Calu3 (cell line): ENCODE measurements at regions of chrX and their contacts with region 1.

Region 1: GRCh38 chrX:19334945-19335626 is 8.6 kb upstream of the PDHA1 start:
- DNase-seq: no peak
- H3K4me3 Mint-ChIP-seq: no peak overlapping the region
- H3K27ac Mint-ChIP-seq: no peak overlapping the region
- H3K4me1 Mint-ChIP-seq: no peaks in the 10 kb centered on the region
- H3K27me3 Mint-ChIP-seq: peaks cover 22% of the 10 kb centered on the region
- CTCF ChIP-seq: no peak

Region 2: GRCh38 chrX:18390941-18391538 is 944.0 kb before region 1 on chrX:
- CTCF ChIA-PET with region 1: interaction called, 4 read pairs
- intact Hi-C with region 1: loop called (anchors 1 kb)
- DNase-seq: peak; percentile 45
- H3K4me3 Mint-ChIP-seq: no peak overlapping the region
- H3K27ac Mint-ChIP-seq: no peak overlapping the region
- H3K4me1 Mint-ChIP-seq: peaks cover 10% of the 10 kb centered on the region
- H3K27me3 Mint-ChIP-seq: no peaks in the 10 kb centered on the region
- CTCF ChIP-seq: peak; percentile 15

Region 3: DNA sequence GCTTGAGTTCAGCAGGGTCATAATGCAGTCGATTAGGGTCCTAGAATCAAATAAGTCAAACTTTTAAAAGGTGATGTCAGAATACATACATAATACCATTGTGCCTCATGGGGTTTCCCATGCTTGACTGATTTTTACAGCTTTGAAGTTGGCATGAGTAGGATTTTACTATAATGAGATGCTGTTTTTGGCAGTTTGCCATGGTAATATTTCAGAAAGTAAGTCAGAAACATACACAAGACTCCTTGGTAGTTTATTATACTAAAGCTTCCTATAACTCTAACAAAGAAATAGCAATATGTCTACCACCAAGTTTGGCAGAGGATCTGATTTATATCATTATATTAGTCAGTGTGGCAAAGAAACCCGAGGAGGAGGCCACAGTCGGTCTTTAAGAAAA is 396.4 kb before region 1 on chrX:
- CTCF ChIA-PET with region 1: no interaction called
- intact Hi-C with region 1: loop called (anchors 5 kb)
- DNase-seq: no peak
- H3K4me3 Mint-ChIP-seq: no peak overlapping the region
- H3K27ac Mint-ChIP-seq: no peak overlapping the region
- H3K4me1 Mint-ChIP-seq: no peaks in the 10 kb centered on the region
- H3K27me3 Mint-ChIP-seq: no peaks in the 10 kb centered on the region
- CTCF ChIP-seq: no peak

Region 4: GRCh38 chrX:18973527-18974192 is 361.4 kb before region 1 on chrX:
- CTCF ChIA-PET with region 1: interaction called, 10 read pairs
- intact Hi-C with region 1: no loop called
- DNase-seq: peak; percentile 49
- H3K4me3 Mint-ChIP-seq: no peak overlapping the region
- H3K27ac Mint-ChIP-seq: peak overlapping the region; percentile 18
- H3K4me1 Mint-ChIP-seq: peaks cover 27% of the 10 kb centered on the region
- H3K27me3 Mint-ChIP-seq: no peaks in the 10 kb centered on the region
- CTCF ChIP-seq: no peak

Region 5: DNA sequence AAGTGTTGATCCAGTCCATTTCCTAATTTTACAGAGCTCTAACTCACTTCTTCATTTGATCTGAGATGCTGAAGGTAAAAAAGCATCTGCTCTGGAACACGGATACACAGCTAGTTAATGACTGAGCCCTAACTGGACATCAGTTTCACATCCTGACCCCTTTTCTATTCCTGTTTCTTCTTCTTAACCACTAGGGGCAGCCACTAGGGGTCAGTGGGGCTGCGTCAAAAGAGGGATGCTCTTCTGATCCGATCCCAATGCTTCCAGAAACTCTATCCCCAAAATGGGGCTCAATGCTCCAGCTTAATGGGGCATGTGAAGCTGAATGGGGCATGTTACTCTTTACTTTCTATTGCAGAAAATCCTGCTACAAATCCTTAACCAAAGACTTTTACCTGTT is 317.8 kb before region 1 on chrX:
- CTCF ChIA-PET with region 1: interaction called, 4 read pairs
- intact Hi-C with region 1: loop called (anchors 5 kb)
- DNase-seq: peak; percentile 30
- H3K4me3 Mint-ChIP-seq: no peak overlapping the region
- H3K27ac Mint-ChIP-seq: no peak overlapping the region
- H3K4me1 Mint-ChIP-seq: no peaks in the 10 kb centered on the region
- H3K27me3 Mint-ChIP-seq: no peaks in the 10 kb centered on the region
- CTCF ChIP-seq: peak; percentile 41

Region 6: DNA sequence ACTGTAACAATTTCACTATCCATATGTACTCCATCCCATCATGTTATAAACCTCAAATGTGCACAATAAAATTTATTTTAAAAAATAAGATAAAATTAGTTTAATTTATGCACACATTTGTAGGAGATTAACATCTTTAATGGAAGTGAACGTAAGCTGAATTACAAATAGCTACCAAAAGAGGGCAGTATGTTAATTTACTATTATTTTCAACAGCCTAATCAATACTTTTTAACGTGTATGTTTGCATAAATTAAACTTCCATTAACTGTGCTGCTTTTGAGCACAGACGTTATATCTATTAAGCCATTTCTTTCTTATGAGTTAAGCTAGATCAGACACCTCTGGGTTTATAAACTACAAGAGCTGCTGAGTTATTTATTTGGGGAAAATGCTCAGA is 294.7 kb before region 1 on chrX:
- CTCF ChIA-PET with region 1: interaction called, 8 read pairs
- intact Hi-C with region 1: loop called (anchors 5 kb)
- DNase-seq: no peak
- H3K4me3 Mint-ChIP-seq: no peak overlapping the region
- H3K27ac Mint-ChIP-seq: no peak overlapping the region
- H3K4me1 Mint-ChIP-seq: no peaks in the 10 kb centered on the region
- H3K27me3 Mint-ChIP-seq: no peaks in the 10 kb centered on the region
- CTCF ChIP-seq: peak; percentile 17

Region 7: DNA sequence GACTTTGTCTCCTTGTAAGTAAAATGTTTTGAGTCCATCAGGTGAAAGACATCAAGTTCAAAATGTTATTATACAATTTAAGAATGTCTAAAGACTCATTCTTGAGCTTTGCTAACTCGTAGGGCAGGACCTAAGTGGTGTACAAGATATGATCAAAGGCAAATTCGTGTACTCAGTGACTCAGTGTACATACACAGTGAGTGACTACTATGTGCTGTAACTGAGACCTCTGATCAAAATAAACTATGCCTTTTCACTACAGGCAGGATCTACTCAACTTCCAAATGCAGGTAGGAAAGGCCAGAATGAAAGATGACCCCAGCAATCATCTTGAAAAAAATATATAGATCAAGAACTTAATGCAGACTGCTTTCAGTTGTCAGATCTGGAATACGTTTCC is 262.7 kb before region 1 on chrX:
- CTCF ChIA-PET with region 1: no interaction called
- intact Hi-C with region 1: no loop called
- DNase-seq: no peak
- H3K4me3 Mint-ChIP-seq: no peak overlapping the region
- H3K27ac Mint-ChIP-seq: no peak overlapping the region
- H3K4me1 Mint-ChIP-seq: no peaks in the 10 kb centered on the region
- H3K27me3 Mint-ChIP-seq: no peaks in the 10 kb centered on the region
- CTCF ChIP-seq: no peak

Region 8: DNA sequence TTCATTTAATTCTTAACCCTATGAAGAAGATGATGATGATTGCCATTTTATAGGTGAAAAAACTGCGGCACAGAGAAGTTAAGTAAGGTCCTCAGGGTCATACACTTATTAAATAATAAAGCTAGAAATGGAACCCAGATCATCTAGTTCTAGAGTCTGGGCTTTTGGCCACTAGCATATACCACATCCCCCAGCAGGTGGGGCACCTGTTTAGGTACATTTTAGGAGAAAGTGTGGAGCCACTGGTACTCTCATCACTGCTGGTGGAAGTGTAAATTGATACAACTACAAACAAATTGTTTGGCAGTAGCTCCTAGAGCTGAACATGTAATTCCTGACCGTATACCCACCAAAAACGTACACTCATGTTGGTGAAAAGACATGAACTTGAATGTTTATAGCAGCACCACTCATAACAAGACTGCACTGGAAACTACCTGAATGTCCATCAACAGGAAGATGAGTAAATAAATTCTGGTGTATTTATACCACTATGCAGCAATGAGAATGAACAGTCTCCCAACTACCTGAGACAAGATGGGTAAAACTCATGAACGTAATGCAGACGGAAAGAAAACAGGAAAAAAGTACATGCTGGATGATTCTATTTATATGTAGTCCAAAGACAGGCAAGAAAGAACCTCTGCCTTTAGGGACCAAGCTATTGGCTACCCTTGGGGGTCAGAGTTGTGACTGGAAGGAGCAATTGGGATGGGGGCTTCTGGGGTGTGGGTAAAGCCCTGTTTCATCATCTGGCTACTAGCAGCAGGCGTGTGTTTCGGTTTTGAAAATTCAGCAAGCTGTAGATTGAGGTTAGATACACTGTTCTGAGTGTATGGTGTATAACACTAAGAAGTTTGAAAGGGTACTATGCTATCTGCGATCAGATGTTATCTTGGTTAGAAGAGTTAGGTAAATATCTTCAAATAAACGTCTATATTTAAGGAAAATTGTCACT is 140.5 kb before region 1 on chrX:
- CTCF ChIA-PET with region 1: no interaction called
- intact Hi-C with region 1: no loop called
- DNase-seq: peak; percentile 6
- H3K4me3 Mint-ChIP-seq: no peak overlapping the region
- H3K27ac Mint-ChIP-seq: no peak overlapping the region
- H3K4me1 Mint-ChIP-seq: no peaks in the 10 kb centered on the region
- H3K27me3 Mint-ChIP-seq: peaks cover 64% of the 10 kb centered on the region
- CTCF ChIP-seq: no peak

Region 9: GRCh38 chrX:19758539-19758938 is 423.5 kb after region 1 on chrX:
- CTCF ChIA-PET with region 1: no interaction called
- intact Hi-C with region 1: no loop called
- DNase-seq: no peak
- H3K4me3 Mint-ChIP-seq: peak overlapping the region; percentile 9
- H3K27ac Mint-ChIP-seq: peak overlapping the region; percentile 71
- H3K4me1 Mint-ChIP-seq: peaks cover 56% of the 10 kb centered on the region
- H3K27me3 Mint-ChIP-seq: no peaks in the 10 kb centered on the region
- CTCF ChIP-seq: no peak